Right ventricle myocardium superior (tissue), 1 donor: ENCODE measurements at regions of chr1 and their contacts with region 1.

Region 1: DNA sequence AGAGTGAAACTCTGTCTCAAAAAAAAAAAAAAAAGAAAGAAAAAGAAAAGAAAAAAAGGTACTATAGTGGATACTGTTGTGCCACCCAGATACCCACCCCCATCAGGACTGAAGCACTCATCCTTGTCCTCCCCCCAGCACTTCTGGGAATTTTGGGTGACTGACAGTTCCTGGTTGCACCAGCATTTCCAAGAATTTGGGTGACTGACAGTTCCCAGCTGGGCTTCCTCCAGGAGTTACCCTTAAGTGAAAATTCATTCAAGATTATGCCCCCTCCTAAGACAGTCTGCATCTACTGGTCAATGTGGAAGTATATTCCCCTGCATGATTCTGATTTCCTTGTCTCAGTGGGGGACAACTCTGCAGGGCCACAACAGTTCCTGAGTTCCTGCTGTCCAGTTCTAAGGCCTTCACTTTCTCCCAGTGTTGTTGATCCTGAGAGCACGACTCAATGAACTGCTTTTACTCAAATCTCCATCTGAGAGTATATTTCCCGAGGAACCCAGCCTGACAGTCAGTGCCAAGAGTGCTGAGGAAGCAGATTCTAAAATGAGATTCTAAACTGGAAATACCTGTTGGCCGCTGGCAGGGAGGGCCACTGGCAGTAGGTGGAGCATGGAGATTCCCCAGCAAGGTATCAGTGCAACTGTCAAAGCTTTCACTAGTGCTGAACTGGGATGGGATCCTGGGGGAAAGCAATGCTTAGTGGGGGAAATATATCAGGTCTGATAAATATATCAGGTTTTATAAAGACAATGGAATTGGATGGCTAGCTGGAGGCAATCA is 18.5 kb downstream of the RIIAD1 start:
- DNase-seq: no peak
- ATAC-seq: no peak

Region 2: DNA sequence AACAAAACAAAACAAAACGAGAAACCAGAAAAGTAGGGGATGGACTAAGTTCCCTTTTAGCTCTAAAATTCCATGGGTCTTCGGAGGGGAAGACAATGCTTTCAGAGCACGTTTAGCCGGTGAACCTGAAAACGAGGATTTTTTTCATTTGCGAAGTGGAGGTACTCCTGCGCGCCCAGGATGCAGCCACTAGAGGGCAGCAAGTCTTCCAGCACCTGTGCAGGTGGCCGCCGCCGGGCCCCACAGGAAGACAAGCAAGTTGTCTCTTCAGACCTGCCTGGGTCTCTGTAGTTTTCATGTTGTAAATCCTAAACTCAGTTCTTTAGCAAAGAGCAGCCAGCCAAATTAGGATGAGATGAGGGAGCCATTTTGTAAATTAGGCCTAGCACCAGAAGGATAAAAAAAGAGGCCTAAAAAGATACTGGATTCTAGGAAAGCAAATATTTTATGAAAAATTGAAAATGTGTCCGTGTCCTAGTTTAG is 145.6 kb before region 1 on chr1:
- intact Hi-C with region 1: loop called (anchors 2 kb)
- DNase-seq: peak; percentile 86
- ATAC-seq: peak; percentile 82

Region 3: GRCh38 chr1:151673407-151673806 is 66.4 kb before region 1 on chr1:
- intact Hi-C with region 1: loop called (anchors 10 kb)
- DNase-seq: no peak
- ATAC-seq: no peak

Region 4: GRCh38 chr1:151693076-151693651 is 46.6 kb before region 1 on chr1:
- intact Hi-C with region 1: loop called (anchors 5 kb)
- DNase-seq: no peak
- ATAC-seq: peak; percentile 57